ENCODE measurements at regions of chr17 and their contacts with region 1.

Region 1: GRCh38 chr17:79087428-79088143 is 13.0 kb downstream of the ENGASE start:
- DNase-seq: peak; percentile 97
- H3K4me3 ChIP-seq: no peak overlapping the region; a peak in 1 of 4 replicates
- H3K27ac ChIP-seq: no peak overlapping the region
- H3K4me1 ChIP-seq: peaks cover 0 to 9% of the 10 kb centered on the region in 2 experiments; a peak in 1 of 4 replicates
- H3K27me3 ChIP-seq: no peaks in the 10 kb centered on the region
- CTCF ChIP-seq: peak; percentile 97
- EP300 ChIP-seq: no peak
- RAD21 ChIP-seq: peak; percentile 96

Region 2: GRCh38 chr17:78879635-78880186 is 207.9 kb before region 1 on chr17:
- CTCF ChIA-PET with region 1: no interaction called
- POLR2A ChIA-PET with region 1: no interaction called
- DNase-seq: peak; percentile 76
- H3K4me3 ChIP-seq: no peak overlapping the region
- H3K27ac ChIP-seq: peak overlapping the region; percentile 52 to 65
- H3K4me1 ChIP-seq: peaks cover 37 to 79% of the 10 kb centered on the region in 2 experiments
- H3K27me3 ChIP-seq: no peaks in the 10 kb centered on the region
- CTCF ChIP-seq: no peak
- EP300 ChIP-seq: peak in 1 of 2 experiments; percentile 41; a peak in 1 of 4 replicates
- RAD21 ChIP-seq: no peak

Region 3: DNA sequence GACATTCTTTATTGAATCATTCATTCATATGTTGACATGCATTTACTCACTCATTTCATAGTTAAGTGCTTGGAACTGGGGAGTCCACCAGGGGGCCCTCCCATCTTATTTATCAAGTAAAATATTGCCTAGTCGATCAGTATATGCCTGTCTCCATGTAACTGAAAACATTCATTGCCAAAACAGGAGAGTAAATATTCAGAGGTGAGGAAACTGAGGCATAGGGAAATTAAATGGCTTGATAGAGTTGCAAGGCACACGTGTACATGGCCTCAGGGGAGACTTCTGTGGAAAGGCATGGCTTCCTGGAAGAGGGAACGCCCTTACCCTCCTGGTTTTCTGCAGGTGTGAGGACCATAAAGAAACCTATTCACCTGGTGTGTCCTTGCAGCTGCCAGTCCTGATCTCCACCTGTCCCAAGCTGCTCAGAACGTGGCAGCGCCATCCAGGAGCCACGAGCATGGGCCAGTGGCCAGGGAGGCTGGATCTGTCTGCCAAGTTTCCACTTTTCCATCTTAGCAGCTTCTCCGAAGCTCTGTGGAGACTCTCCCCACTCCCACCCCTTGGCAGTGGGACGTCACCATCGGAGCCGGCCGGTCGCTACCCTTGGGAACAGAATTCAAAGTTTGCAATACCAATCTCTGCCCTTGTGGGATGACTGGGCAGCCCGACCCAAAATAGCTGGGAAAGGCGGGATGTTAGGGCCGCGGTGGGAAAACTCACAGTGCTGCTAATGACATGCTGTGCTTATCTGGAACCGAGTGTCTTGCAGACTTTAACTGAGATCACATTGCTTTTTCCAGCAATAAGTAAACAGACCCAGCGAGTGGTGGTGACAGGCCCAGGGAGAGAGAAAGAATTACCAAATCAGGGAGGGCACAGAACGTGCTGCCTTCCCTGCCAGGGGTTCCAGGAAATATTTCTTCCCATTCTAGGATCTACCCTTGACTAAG is 67.7 kb before region 1 on chr17:
- CTCF ChIA-PET with region 1: interaction called, 86 read pairs
- POLR2A ChIA-PET with region 1: no interaction called
- DNase-seq: peak; percentile 81
- H3K4me3 ChIP-seq: no peak overlapping the region; a peak in 1 of 4 replicates
- H3K27ac ChIP-seq: no peak overlapping the region
- H3K4me1 ChIP-seq: peaks cover 3 to 12% of the 10 kb centered on the region in 2 experiments; a peak in 3 of 4 replicates
- H3K27me3 ChIP-seq: no peaks in the 10 kb centered on the region
- CTCF ChIP-seq: peak; percentile 99
- EP300 ChIP-seq: no peak
- RAD21 ChIP-seq: peak; percentile 98

Region 4: GRCh38 chr17:79114458-79115301 is 27.1 kb after region 1 on chr17:
- CTCF ChIA-PET with region 1: interaction called, 364 read pairs
- POLR2A ChIA-PET with region 1: interaction called, 3 read pairs
- DNase-seq: peak; percentile 97
- H3K4me3 ChIP-seq: no peak overlapping the region; a peak in 1 of 4 replicates
- H3K27ac ChIP-seq: peak overlapping the region in 1 of 2 experiments; percentile 40; a peak in 1 of 4 replicates
- H3K4me1 ChIP-seq: peaks cover 0 to 27% of the 10 kb centered on the region in 2 experiments; a peak in 1 of 4 replicates
- H3K27me3 ChIP-seq: peaks cover 35% of the 10 kb centered on the region
- CTCF ChIP-seq: no peak
- EP300 ChIP-seq: peak in 1 of 2 experiments; percentile 59; a peak in 2 of 4 replicates
- RAD21 ChIP-seq: no peak; the same call in 1 of the 2 replicates

Region 5: DNA sequence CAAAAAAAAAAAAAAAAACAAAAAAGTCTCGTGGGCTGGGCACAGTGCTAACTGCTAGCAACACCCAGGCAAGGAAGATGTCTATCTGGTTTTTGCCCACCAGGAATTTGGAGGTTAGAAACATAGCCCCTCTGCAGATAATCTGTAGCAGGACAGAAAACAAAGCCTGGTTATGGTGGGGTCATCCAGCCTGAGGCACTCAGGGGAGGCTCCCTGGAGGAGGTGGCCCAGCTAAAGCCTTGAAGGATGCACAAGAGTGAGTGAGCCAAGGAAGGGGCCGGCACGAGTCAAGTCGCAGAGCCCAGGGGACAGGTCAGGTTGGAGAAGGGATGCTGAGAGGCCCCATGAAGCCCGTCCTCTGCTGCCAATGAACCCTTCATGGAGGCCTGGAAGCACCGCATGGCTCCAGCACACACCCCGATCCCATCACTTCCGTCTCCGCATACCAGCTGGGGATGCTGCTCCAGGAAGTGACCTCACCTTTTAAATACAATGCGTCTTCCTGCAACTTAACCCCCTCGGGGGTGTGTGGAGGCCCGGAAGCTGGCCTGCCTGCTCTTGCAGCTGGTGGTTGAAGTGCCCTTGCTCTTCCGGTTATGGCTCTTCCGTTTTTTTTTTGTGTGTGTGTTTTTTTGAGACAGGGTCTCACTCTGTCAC is 73.5 kb after region 1 on chr17:
- CTCF ChIA-PET with region 1: interaction called, 98 read pairs
- POLR2A ChIA-PET with region 1: no interaction called
- DNase-seq: no peak
- H3K4me3 ChIP-seq: no peak overlapping the region
- H3K27ac ChIP-seq: no peak overlapping the region
- H3K4me1 ChIP-seq: peaks cover 0 to 34% of the 10 kb centered on the region in 2 experiments; a peak in 2 of 4 replicates
- H3K27me3 ChIP-seq: peaks cover 39% of the 10 kb centered on the region
- CTCF ChIP-seq: no peak
- EP300 ChIP-seq: no peak
- RAD21 ChIP-seq: no peak

Region 6: GRCh38 chr17:79201536-79202227 is 114.1 kb after region 1 on chr17:
- CTCF ChIA-PET with region 1: interaction called, 20 read pairs
- POLR2A ChIA-PET with region 1: no interaction called
- DNase-seq: no peak
- H3K4me3 ChIP-seq: no peak overlapping the region
- H3K27ac ChIP-seq: no peak overlapping the region
- H3K4me1 ChIP-seq: peaks cover 0 to 12% of the 10 kb centered on the region in 2 experiments; a peak in 1 of 4 replicates
- H3K27me3 ChIP-seq: peaks cover 38% of the 10 kb centered on the region
- CTCF ChIP-seq: no peak
- EP300 ChIP-seq: no peak
- RAD21 ChIP-seq: no peak

Region 7: GRCh38 chr17:79382322-79382721 is 294.7 kb after region 1 on chr17:
- CTCF ChIA-PET with region 1: interaction called, 1,305 read pairs
- POLR2A ChIA-PET with region 1: no interaction called
- DNase-seq: no peak
- H3K4me3 ChIP-seq: no peak overlapping the region
- H3K27ac ChIP-seq: no peak overlapping the region
- H3K4me1 ChIP-seq: no peaks in the 10 kb centered on the region
- H3K27me3 ChIP-seq: peaks cover 15% of the 10 kb centered on the region; the same call in 1 of the 2 replicates
- CTCF ChIP-seq: no peak
- EP300 ChIP-seq: no peak
- RAD21 ChIP-seq: no peak